ENCODE measurements at regions of chr11 and their contacts with region 1.

Region 1: DNA sequence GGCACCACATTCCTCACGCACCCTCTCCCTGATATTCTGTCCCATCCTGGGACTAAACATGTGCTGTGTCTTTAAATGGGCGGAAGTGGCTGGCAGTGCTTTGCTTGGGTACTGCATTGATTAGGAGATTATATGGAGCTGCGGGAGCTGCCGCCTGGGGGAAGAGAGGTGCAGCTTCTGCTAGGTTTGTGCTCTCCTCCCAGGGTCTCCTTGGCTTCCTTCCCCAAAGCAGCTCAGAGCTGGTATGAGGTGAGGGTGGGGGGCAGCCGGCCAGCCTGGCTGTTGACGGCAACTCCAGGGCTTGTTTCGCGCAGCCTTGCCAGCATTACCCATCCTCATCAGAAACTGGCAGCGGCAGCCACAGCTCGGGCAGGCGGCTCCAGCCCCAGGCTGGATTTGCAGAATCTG is 95.4 kb downstream of the GRAMD1B start:
- DNase-seq: peak in 7 of 10 donors; percentile 26 to 91 (median 66)

Region 2: DNA sequence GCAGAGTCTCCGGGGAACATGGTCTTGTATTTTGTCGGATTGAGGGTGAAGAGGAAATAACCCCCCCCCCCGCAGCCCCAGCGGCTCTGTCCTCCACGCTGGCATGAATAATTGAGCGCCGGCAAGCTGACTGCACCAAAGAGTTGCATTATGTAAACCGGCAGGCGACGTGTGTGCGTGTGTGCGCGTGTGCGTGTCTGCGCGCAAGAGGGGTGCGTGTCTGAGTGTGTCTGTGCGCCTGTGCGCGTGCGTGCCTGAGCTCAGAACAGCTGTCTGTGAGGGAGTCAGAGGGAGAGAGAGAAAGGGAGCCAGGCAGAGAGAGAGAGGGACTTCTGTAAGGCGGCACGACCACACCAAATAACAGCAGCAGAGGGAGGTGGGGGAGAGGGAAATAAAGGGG is 34.5 kb after region 1 on chr11:
- intact Hi-C with region 1: loop called (anchors 5 kb)
- DNase-seq: peak; percentile 57 to 97 (median 84)

Region 3: DNA sequence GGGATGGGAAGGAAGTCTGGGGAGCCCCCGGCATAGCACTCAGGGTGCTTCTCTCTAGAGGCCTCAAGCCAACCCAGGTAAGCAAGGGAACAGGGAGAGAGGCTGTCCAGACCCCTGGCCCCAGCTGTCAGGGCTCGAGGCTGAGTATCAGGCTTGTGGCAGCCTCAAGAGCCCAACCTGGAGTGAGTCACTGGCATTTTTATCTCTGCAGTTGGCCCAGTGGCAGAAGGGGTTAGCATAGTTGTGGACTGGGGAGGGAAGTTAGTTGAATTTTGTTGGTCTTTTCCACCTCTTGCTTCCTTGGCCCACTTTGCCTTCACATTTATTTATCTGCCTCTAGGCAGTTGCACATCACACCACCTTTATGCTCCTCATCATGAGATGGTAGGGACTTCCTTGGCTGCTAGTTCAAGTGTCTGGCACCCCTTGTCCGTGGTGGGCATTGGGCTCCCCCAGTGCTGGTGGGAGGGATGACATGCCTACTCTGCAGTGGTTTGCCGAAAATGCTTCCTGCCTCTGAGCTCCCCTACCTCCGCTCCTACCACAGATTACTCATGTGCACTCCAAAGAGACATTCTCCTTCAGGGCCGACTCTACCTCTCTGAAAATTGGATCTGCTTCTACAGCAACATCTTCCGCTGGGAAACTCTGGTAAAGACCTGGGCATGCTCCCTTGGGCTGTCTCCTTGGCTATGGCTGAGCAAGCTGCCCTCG is 68.8 kb after region 1 on chr11:
- intact Hi-C with region 1: no loop called
- DNase-seq: no peak